ENCODE measurements at regions of chr18 and their contacts with region 1.

Region 1: GRCh38 chr18:48022531-48023329 is 92.3 kb upstream of the SMAD2 start:
- DNase-seq: peak; percentile 12
- ATAC-seq: peak; percentile 78
- H3K4me3 Mint-ChIP-seq: no peak overlapping the region
- H3K27ac Mint-ChIP-seq: no peak overlapping the region
- H3K4me1 Mint-ChIP-seq: no peaks in the 10 kb centered on the region
- H3K27me3 Mint-ChIP-seq: peaks cover 11% of the 10 kb centered on the region
- CTCF ChIP-seq: peak; percentile 70

Region 2: GRCh38 chr18:48007955-48008701 is 14.6 kb before region 1 on chr18:
- CTCF ChIA-PET with region 1: interaction called, 10 read pairs
- POLR2A ChIA-PET with region 1: interaction called, 3 read pairs
- intact Hi-C with region 1: no loop called
- DNase-seq: peak; percentile 36
- ATAC-seq: peak; percentile 71
- H3K4me3 Mint-ChIP-seq: peak overlapping the region; percentile 54
- H3K27ac Mint-ChIP-seq: no peak overlapping the region
- H3K4me1 Mint-ChIP-seq: peaks cover 6% of the 10 kb centered on the region
- H3K27me3 Mint-ChIP-seq: peaks cover 9% of the 10 kb centered on the region
- CTCF ChIP-seq: peak; percentile 77

Region 3: GRCh38 chr18:48037481-48038271 is 14.9 kb after region 1 on chr18:
- CTCF ChIA-PET with region 1: no interaction called
- POLR2A ChIA-PET with region 1: no interaction called
- intact Hi-C with region 1: no loop called
- DNase-seq: no peak
- ATAC-seq: no peak
- H3K4me3 Mint-ChIP-seq: no peak overlapping the region
- H3K27ac Mint-ChIP-seq: no peak overlapping the region
- H3K4me1 Mint-ChIP-seq: no peaks in the 10 kb centered on the region
- H3K27me3 Mint-ChIP-seq: no peaks in the 10 kb centered on the region
- CTCF ChIP-seq: no peak